ENCODE measurements at regions of chr9 and their contacts with region 1.

Region 1: DNA sequence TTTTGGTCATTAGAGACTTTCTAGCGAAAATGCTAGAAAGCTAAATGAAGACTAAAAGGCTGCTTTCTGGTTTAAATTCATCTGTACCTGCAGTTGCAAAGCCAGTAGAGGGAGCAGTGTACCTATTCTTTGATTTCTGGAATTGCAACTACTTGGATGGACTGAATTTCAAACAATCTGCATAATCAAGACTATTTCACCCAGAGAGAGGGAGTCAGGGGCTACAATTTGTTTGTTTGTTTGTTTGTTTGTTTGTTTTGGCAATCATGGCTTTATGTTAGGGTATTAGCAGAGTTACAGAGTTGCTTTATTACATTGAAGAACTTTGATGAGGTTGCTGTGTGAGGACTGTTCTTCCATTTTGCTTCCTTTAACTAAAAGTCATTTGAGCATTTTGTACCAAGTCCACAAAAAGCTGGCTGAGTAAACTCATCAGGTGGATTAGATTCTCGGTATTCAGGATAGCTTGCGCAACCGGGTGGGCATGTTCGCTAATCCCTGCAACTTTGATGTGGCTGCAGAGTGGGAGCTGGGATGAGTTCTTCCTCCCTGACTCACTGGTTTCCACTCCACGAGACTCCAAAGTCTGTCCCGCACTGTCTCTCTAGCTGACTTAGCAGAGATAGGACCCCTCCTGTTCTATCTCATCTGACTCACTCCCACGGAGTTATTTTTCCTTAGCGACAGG is 80.0 kb upstream of the TUT7 start:
- DNase-seq: no peak
- ATAC-seq: no peak
- H3K4me3 ChIP-seq: no peak overlapping the region
- H3K27ac ChIP-seq: no peak overlapping the region
- H3K4me1 ChIP-seq: no peaks in the 10 kb centered on the region
- H3K27me3 ChIP-seq: no peaks in the 10 kb centered on the region
- CTCF ChIP-seq: peak; percentile 74; the same call in 1 of the 2 replicates

Region 2: DNA sequence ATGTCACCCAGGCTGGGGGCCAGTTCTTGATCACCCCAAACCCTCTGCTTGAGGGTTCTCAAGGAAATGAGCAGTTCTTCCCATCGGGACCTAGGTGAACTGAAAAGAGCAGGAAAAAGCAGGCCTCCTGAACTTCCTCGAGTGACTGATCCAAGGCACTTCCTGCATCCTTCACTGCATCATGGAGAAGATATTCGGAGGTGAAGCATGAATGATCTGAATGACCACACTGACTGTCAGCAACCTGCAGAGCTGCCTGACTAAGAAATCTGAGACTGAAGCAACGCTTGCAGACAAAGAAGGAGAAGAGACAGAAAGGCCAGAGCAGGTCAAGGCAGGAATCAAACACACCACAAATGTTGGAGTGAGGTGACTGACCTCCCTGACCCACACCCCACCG is 1112.6 kb before region 1 on chr9:
- CTCF ChIA-PET with region 1: no interaction called
- POLR2A ChIA-PET with region 1: no interaction called
- in situ Hi-C with region 1: no loop called
- intact Hi-C with region 1: no loop called
- DNase-seq: no peak
- ATAC-seq: no peak
- H3K4me3 ChIP-seq: no peak overlapping the region
- H3K27ac ChIP-seq: no peak overlapping the region
- H3K4me1 ChIP-seq: no peaks in the 10 kb centered on the region
- H3K27me3 ChIP-seq: no peaks in the 10 kb centered on the region
- CTCF ChIP-seq: no peak

Region 3: DNA sequence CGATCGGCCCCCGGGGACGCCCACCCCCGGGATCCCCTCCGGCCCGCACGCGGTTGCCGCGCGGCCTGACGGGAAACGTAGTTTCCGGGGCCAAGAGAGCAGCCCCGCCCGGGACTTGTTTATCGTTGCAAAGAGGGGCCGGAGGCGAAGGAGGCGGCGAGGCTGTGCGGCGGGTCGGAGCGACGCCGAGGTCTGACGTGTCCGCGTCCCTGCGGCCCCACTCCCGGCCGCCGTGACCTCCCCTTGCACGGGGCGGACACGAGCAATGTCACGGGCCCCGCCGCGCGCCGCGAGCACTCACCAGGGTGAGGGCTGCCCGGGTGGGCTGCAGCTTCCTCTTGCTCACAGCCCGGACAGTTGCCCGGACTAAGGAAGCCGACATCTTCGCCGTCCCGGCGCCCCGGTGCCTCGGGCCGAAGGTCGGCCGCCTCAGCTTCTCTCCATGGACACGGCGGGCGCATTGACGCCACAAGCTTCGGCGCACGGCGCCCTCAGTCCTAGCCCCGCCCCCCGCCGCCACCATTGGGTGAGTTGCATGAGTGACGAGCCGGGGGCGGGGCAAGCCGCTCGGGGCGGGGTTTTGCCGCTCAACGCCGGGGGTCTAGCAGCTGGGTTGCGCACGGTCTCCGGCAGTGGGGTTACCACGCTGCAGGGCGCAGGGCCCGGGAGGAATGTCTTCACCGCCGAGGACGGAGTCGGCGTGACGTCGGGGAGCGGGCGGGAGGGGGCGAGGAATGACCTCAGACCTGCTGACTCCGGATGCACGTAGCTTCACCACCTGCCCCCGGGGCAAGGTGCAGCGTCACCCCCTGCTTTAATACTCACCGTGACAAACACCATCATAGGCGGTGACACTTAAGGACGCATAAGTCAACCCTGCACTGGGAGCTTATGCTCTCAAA is 151.9 kb before region 1 on chr9 and contains the start of gene ISCA1:
- CTCF ChIA-PET with region 1: no interaction called
- POLR2A ChIA-PET with region 1: no interaction called
- in situ Hi-C with region 1: no loop called
- intact Hi-C with region 1: no loop called
- DNase-seq: no peak
- ATAC-seq: peak; percentile 97
- H3K4me3 ChIP-seq: peak within 1 kb of the TSS; percentile 78 to 92
- H3K27ac ChIP-seq: peak within 1 kb of the TSS; percentile 87
- H3K4me1 ChIP-seq: peaks cover 4% of the 10 kb centered on the region; the same call in 1 of the 2 replicates
- H3K27me3 ChIP-seq: no peaks in the 10 kb centered on the region
- CTCF ChIP-seq: no peak
- total RNA-seq, gene ISCA1: 19.9 TPM

Region 4: DNA sequence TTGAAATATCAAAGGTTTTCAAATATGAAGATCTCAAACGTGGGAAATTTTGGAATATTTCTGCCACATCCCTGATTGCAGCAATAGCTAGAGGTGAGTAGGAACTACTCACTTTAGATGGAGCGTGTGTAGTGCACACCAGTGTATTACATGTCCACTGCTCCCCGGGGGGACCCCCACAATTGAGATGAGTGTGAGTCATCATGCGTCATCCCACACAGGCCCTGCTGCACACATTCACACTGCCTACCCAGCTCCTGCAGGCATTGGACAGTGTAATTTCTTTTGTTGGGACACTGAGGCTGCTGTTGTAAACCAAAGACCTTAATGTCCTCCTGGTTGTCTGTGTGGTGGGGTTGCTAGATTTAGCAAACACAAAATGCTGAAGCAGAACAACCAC is 233.1 kb after region 1 on chr9:
- CTCF ChIA-PET with region 1: no interaction called
- POLR2A ChIA-PET with region 1: no interaction called
- in situ Hi-C with region 1: no loop called
- intact Hi-C with region 1: no loop called
- DNase-seq: no peak
- ATAC-seq: no peak
- H3K4me3 ChIP-seq: no peak overlapping the region
- H3K27ac ChIP-seq: no peak overlapping the region
- H3K4me1 ChIP-seq: no peaks in the 10 kb centered on the region
- H3K27me3 ChIP-seq: no peaks in the 10 kb centered on the region
- CTCF ChIP-seq: no peak

Region 5: GRCh38 chr9:86977205-86977835 is 543.1 kb after region 1 on chr9:
- CTCF ChIA-PET with region 1: no interaction called
- POLR2A ChIA-PET with region 1: interaction called, 12 read pairs
- in situ Hi-C with region 1: no loop called
- intact Hi-C with region 1: no loop called
- DNase-seq: no peak
- ATAC-seq: no peak
- H3K4me3 ChIP-seq: no peak overlapping the region
- H3K27ac ChIP-seq: no peak overlapping the region
- H3K4me1 ChIP-seq: no peaks in the 10 kb centered on the region
- H3K27me3 ChIP-seq: no peaks in the 10 kb centered on the region
- CTCF ChIP-seq: no peak

Region 6: GRCh38 chr9:87662808-87663528 is 1228.8 kb after region 1 on chr9:
- CTCF ChIA-PET with region 1: no interaction called
- POLR2A ChIA-PET with region 1: no interaction called
- in situ Hi-C with region 1: no loop called
- intact Hi-C with region 1: loop called (anchors 10 kb)
- DNase-seq: no peak
- ATAC-seq: peak; percentile 88
- H3K4me3 ChIP-seq: no peak overlapping the region
- H3K27ac ChIP-seq: no peak overlapping the region
- H3K4me1 ChIP-seq: no peaks in the 10 kb centered on the region
- H3K27me3 ChIP-seq: no peaks in the 10 kb centered on the region
- CTCF ChIP-seq: peak; percentile 84

Measured in Panc1 (cell line).